Activated CD4-positive, alpha-beta T cell treated with anti-CD3 and anti-CD28 coated beads for 36 hours (primary cell): ENCODE measurements at regions of chr5 and their contacts with region 1.

Region 1: DNA sequence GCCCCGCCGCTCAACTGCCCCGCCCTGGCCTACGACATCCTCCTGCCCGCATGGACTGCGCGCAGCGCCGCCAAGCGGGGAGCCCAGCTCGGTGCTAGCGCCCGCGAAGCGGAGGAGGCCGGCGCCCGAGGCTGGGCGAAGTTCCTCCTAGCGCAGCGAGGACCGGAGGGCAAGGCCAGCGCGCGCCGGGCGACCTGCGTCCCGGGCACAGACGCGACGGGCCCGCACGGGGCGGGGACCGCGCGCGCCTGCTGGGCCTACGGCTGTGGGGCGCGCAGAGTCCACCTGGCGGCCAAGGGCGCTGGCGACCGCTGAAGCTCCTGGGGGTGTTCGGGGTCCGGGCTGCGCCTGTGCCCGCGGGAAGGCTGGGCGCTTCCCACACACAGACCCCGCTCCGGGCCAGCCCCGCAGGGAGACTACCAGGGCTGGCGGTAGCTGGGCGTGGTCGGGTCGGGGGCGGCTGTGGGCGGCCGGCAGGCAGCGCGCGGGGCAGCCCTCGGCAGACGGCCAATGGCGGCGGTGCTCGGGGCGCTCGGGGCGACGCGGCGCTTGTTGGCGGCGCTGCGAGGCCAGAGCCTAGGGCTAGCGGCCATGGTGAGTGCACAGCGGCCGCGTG is at the start of gene PCBD2:
- DNase-seq: peak; percentile 97
- ATAC-seq: peak; percentile 89
- H3K4me3 Mint-ChIP-seq: peak within 1 kb of the TSS; percentile 95
- H3K27ac Mint-ChIP-seq: peak within 1 kb of the TSS; percentile 98
- H3K4me1 Mint-ChIP-seq: peaks cover 17% of the 10 kb centered on the region
- H3K27me3 Mint-ChIP-seq: no peaks in the 10 kb centered on the region
- total RNA-seq, gene PCBD2: 10.0 to 12.8 TPM

Region 2: DNA sequence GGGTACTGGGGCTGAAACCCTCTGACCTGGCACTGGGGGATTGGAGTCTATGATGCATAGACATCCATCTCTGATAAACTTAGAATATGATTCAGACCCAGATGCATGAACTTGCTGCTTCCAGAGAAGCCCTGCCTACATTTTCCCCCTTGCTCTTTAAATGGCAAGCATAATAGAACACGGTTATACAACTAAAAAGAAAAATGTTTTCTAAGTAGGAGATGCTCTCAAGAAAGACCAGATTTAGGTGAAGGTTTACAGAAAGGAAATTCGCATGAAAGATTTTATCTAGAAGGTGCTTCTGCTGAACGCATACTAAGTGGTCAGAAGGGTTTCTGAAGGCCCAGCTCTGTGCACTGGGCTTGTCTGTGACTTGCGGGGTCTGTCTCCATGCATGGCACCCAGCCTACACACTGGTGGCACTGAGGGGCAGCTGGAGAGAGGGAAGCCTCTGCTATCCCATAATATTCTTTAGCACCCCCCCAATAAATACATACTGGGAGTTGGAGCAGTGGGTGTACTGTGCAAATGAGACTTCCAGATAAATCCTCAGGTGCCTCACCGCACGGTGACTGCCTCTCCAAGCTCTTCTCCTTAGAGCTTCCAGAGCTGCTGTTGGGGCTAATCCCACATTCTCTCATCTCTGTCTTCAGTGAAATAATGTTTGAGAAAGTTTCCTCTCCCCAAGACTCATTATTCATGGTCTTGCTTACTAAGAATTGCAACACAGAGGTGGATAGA is 1407.0 kb before region 1 on chr5:
- CTCF ChIA-PET with region 1: no interaction called
- POLR2A ChIA-PET with region 1: no interaction called
- intact Hi-C with region 1: no loop called
- DNase-seq: no peak
- ATAC-seq: no peak
- H3K4me3 Mint-ChIP-seq: no peak overlapping the region
- H3K27ac Mint-ChIP-seq: no peak overlapping the region
- H3K4me1 Mint-ChIP-seq: no peaks in the 10 kb centered on the region
- H3K27me3 Mint-ChIP-seq: no peaks in the 10 kb centered on the region

Region 3: DNA sequence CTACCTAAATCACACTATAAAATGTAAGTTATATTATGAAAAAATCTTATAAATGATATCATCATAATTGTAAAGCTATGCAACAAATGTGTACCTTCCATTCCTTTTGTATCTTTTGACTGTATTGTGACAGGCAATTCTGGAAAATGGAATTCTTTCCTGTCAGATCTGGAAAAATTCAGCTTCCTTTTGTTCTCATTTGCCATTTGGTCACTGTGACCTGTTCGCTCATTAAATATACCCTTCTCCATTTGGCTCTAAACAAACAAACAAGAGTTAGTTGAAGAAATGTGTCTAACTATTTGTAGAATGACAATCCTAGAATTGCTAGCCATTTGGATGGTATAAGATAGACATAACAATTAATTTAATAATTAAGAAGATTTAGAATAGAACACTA is 600.4 kb before region 1 on chr5:
- CTCF ChIA-PET with region 1: interaction called, 3 read pairs
- POLR2A ChIA-PET with region 1: no interaction called
- intact Hi-C with region 1: loop called in 1 of 2 experiments (anchors 2 kb)
- DNase-seq: no peak
- ATAC-seq: no peak
- H3K4me3 Mint-ChIP-seq: no peak overlapping the region
- H3K27ac Mint-ChIP-seq: no peak overlapping the region
- H3K4me1 Mint-ChIP-seq: no peaks in the 10 kb centered on the region
- H3K27me3 Mint-ChIP-seq: no peaks in the 10 kb centered on the region

Region 4: GRCh38 chr5:134603059-134603458 is 301.7 kb before region 1 on chr5:
- CTCF ChIA-PET with region 1: no interaction called
- POLR2A ChIA-PET with region 1: no interaction called
- intact Hi-C with region 1: loop called in 1 of 2 experiments (anchors 1 kb)
- DNase-seq: no peak
- ATAC-seq: peak; percentile 91
- H3K4me3 Mint-ChIP-seq: peak overlapping the region; percentile 10
- H3K27ac Mint-ChIP-seq: peak overlapping the region; percentile 25
- H3K4me1 Mint-ChIP-seq: peaks cover 54% of the 10 kb centered on the region
- H3K27me3 Mint-ChIP-seq: no peaks in the 10 kb centered on the region

Region 5: GRCh38 chr5:134758504-134759341 is 146.0 kb before region 1 on chr5 and contains the start of gene DDX46:
- CTCF ChIA-PET with region 1: no interaction called
- POLR2A ChIA-PET with region 1: interaction called, 4 read pairs
- intact Hi-C with region 1: loop called (anchors 1 kb)
- DNase-seq: peak; percentile 98
- ATAC-seq: peak; percentile 99
- H3K4me3 Mint-ChIP-seq: peak within 1 kb of the TSS; percentile 94
- H3K27ac Mint-ChIP-seq: peak within 1 kb of the TSS; percentile 89
- H3K4me1 Mint-ChIP-seq: peaks cover 29% of the 10 kb centered on the region
- H3K27me3 Mint-ChIP-seq: no peaks in the 10 kb centered on the region
- total RNA-seq, gene DDX46: 63.5 to 86.7 TPM

Region 6: GRCh38 chr5:134845852-134846640 is 58.7 kb before region 1 on chr5 and contains the start of gene C5orf24:
- CTCF ChIA-PET with region 1: interaction called, 12 read pairs
- POLR2A ChIA-PET with region 1: interaction called, 13 read pairs
- intact Hi-C with region 1: loop called (anchors 1 kb)
- DNase-seq: peak; percentile 96
- ATAC-seq: peak; percentile 95
- H3K4me3 Mint-ChIP-seq: peak within 1 kb of the TSS; percentile 95
- H3K27ac Mint-ChIP-seq: peak within 1 kb of the TSS; percentile 97
- H3K4me1 Mint-ChIP-seq: peaks cover 29% of the 10 kb centered on the region
- H3K27me3 Mint-ChIP-seq: no peaks in the 10 kb centered on the region
- total RNA-seq, gene C5orf24: 24.5 to 24.9 TPM

Region 7: DNA sequence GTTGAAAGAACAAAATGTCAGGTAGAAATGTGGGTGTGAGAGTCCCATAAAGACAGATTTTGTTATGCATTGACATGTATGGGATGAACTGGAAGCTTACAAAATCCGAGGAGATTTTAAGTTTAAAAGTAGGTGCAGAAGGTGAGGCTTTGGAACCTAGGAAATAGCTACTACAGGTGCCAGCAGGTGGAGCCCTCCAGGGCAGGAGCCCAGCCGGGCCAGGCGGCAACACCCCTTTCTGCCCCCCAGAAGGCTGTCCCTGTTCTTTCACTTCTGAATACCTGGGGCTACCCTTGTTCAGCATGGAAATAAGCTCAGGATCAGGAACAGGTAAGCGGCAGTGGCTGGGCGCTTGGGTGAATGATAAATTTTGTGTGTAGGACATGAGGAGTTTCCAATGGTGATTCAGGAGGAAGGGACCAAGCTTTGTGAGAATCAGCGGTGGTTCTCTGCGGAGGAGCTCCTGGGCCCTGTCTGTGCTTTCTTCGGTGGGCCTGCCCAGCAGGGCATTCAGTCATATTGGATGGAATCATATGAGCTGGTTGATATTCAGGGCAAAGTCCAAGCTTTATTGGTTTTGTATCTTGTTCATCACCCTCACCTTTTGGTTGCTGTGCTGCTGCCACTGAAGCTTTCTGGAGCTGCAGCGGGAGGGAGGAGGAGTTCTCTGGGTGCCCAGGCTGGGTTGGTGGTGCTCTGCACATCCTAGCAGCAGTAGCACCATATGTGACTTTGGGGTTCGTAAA is 12.5 kb after region 1 on chr5:
- CTCF ChIA-PET with region 1: interaction called, 11 read pairs
- POLR2A ChIA-PET with region 1: interaction called, 3 read pairs
- intact Hi-C with region 1: loop called in 1 of 2 experiments (anchors 1 kb)
- DNase-seq: peak; percentile 30
- ATAC-seq: no peak
- H3K4me3 Mint-ChIP-seq: no peak overlapping the region
- H3K27ac Mint-ChIP-seq: peak overlapping the region; percentile 17
- H3K4me1 Mint-ChIP-seq: peaks cover 29% of the 10 kb centered on the region
- H3K27me3 Mint-ChIP-seq: no peaks in the 10 kb centered on the region